ENCODE measurements at regions of chr11 and their contacts with region 1.

Region 1: GRCh38 chr11:114180301-114181055 is 115.7 kb upstream of the NNMT start:
- DNase-seq: no peak
- H3K4me3 ChIP-seq: peak overlapping the region in 3 of 8 donors; percentile 8 to 45 (median 16)
- H3K27ac ChIP-seq: peak overlapping the region; percentile 22 to 96 (median 86)
- H3K4me1 ChIP-seq: peaks cover 34 to 100% (median 75%) of the 10 kb centered on the region in 6 donors
- H3K27me3 ChIP-seq: no peaks in the 10 kb centered on the region
- CTCF ChIP-seq: peak; percentile 33 to 76 (median 59)
- POLR2A ChIP-seq: no peak

Region 2: DNA sequence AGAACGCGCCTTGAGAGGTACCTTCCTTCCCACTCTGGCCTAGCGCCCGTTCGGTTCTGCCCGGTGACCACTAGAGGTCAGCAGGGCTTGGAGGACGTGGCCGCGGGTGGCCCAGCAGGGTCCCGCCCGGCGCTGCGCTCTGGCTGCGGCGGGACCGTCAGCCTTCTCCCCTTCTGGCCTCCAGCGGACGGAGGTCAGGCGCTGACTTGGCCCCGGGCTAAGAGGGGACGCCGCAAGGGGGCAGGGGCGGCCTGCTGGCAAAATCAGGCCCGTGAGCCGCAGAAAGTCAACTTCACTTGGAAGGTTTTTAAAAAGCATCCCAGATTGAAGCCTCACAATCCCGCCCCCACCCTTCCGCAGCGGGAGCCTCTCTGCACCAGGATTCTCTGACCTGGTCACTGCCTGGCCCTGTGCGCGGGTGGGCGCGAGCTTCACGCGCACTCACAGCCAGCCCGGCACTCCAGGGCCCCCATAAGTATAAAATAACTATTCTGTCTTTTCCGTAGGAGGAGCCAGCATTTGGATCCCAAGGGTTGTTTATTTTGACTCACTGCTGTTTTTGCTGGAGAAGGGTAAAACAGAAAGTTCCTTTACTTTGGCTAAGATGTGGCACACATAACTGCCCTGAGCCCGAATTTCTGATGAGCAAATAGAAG is 144.2 kb before region 1 on chr11:
- intact Hi-C with region 1: loop called (anchors 10 kb)
- DNase-seq: peak; percentile 94
- H3K4me3 ChIP-seq: peak overlapping the region in 7 of 8 donors; percentile 5 to 45 (median 20)
- H3K27ac ChIP-seq: peak overlapping the region in 6 of 8 donors; percentile 5 to 41 (median 28)
- H3K4me1 ChIP-seq: peaks cover 5 to 19% (median 11%) of the 10 kb centered on the region in 6 donors
- H3K27me3 ChIP-seq: peaks cover 0 to 10% (median 0%) of the 10 kb centered on the region in 7 donors
- CTCF ChIP-seq: peak; percentile 83 to 93 (median 90)
- POLR2A ChIP-seq: no peak